H1 (cell line): ENCODE measurements at regions of chr11 and their contacts with region 1.

Region 1: GRCh38 chr11:43920598-43921419 is 21.6 kb upstream of the C11orf96 start:
- DNase-seq: no peak
- H3K4me3 ChIP-seq: no peak overlapping the region
- H3K27ac ChIP-seq: no peak overlapping the region
- H3K4me1 ChIP-seq: peaks cover 2 to 22% (median 11%) of the 10 kb centered on the region in 4 experiments; a peak in 6 of 7 replicates
- H3K27me3 ChIP-seq: no peaks in the 10 kb centered on the region
- CTCF ChIP-seq: no peak
- EP300 ChIP-seq: no peak
- POLR2A ChIP-seq: no peak
- RAD21 ChIP-seq: no peak

Region 2: DNA sequence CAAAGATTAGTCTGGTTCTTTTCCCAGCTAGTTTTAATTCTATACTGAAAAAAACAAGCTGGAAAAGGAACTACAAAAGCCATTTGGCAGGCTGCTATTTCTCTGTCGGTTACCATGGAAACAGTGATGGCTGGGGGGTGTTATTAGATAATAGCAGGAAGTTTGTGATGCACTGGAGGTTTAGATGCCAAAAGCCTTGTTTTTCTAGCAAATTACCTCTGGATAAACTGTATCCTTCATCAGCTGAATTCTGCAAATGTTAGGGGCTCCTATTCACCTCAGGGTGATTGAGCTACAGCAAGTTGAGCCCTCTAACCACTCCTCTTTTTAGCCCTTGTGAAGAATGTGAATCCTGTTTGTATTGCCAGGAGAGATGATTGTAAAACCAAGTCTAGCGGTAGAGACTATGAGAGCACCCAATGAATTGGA is 15.0 kb before region 1 on chr11:
- CTCF ChIA-PET with region 1: interaction called, 12 read pairs
- POLR2A ChIA-PET with region 1: interaction called, 5 read pairs
- DNase-seq: no peak
- H3K4me3 ChIP-seq: no peak overlapping the region
- H3K27ac ChIP-seq: no peak overlapping the region
- H3K4me1 ChIP-seq: no peaks in the 10 kb centered on the region
- H3K27me3 ChIP-seq: no peaks in the 10 kb centered on the region; a peak in 1 of 7 replicates
- CTCF ChIP-seq: no peak
- EP300 ChIP-seq: no peak
- POLR2A ChIP-seq: no peak
- RAD21 ChIP-seq: no peak

Region 3: GRCh38 chr11:43937434-43938411 is 16.9 kb after region 1 on chr11:
- CTCF ChIA-PET with region 1: interaction called, 32 read pairs
- POLR2A ChIA-PET with region 1: interaction called, 13 read pairs
- DNase-seq: no peak
- H3K4me3 ChIP-seq: no peak overlapping the region
- H3K27ac ChIP-seq: no peak overlapping the region
- H3K4me1 ChIP-seq: peaks cover 0 to 11% (median 1%) of the 10 kb centered on the region in 4 experiments; a peak in 5 of 7 replicates
- H3K27me3 ChIP-seq: peaks cover 0 to 29% (median 18%) of the 10 kb centered on the region in 4 experiments; a peak in 6 of 7 replicates
- CTCF ChIP-seq: peak in 2 of 3 experiments; percentile 4 to 22; a peak in 1 of 4 replicates
- EP300 ChIP-seq: no peak
- POLR2A ChIP-seq: no peak
- RAD21 ChIP-seq: 0 out of 4 replicates have a peak, but pooled peaks of 1 of the 2 experiments have one; percentile 4

Region 4: DNA sequence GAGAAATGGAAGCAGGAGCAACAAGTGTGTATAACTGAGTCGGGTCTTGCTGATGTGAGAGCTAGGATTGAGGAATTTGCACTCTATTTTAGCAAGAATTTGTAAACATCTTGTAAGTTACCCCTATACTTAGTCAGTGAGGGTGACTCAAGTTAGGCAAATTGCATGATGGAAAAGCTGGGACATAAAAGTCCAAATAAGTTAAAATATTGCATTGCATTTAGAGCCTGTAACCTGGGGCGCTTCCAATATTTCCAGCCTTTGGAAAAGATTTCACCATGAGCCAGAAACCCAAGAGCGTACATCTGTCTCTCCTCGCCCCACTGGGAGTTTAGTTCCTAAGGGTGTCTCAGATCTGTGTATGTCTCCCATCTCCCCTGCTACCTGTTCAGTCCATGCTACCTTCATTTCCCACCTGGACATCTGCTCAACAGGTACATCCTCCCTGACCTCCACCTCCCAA is 90.0 kb after region 1 on chr11:
- CTCF ChIA-PET with region 1: no interaction called
- POLR2A ChIA-PET with region 1: no interaction called
- DNase-seq: no peak
- H3K4me3 ChIP-seq: no peak overlapping the region
- H3K27ac ChIP-seq: no peak overlapping the region
- H3K4me1 ChIP-seq: peaks cover 0 to 3% (median 0%) of the 10 kb centered on the region in 4 experiments; a peak in 2 of 7 replicates
- H3K27me3 ChIP-seq: no peaks in the 10 kb centered on the region; a peak in 1 of 7 replicates
- CTCF ChIP-seq: no peak
- EP300 ChIP-seq: no peak
- POLR2A ChIP-seq: no peak
- RAD21 ChIP-seq: no peak

Region 5: DNA sequence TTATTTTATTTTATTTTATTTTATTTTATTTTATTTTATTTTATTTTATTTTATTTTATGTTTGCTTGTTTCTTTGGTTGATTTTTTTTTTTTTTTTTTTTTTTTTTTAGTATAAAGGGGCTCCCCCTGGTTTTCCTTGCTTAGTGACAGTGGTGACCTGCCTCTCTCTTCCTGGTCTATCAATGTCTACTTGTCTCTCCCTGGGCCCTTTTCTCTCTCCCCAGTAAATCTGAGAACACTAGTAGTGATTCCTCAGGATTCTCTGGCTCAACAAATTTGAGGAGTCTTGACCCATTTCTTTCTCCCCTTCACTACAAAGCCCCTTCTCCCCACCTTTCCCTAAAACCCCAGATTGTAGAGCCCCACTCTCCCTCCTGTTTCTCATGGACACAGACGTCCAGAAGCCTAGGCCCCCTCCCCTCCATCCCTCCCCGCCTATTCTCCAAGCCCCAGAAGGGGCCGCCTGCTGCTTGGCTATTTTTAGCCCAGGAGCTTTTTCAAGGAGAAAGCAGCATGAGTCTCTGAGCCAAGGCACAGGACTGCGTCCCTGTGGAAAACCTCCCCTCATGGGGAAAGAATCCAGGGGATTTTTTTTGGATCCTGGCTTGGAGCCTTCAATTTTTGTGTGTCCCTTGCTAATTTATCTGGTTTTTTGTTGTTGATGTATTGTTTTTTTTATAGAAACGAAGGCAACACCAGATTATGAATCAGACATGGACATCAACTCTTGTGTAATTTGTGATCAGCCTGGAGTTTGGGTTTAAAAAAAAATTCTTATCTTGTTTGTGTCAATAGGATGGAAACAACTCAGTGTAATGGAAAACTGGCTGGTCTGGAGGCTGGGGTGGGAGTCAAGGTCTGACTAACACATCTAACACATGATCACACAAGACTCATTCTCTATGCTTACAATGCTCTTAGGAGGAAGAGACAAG is 109.4 kb after region 1 on chr11:
- CTCF ChIA-PET with region 1: interaction called, 10 read pairs
- POLR2A ChIA-PET with region 1: no interaction called
- DNase-seq: peak in 1 of 2 experiments; percentile 45
- H3K4me3 ChIP-seq: peak overlapping the region in 1 of 4 experiments; percentile 31; a peak in 1 of 8 replicates
- H3K27ac ChIP-seq: no peak overlapping the region
- H3K4me1 ChIP-seq: peaks cover 0 to 11% (median 4%) of the 10 kb centered on the region in 4 experiments; a peak in 6 of 7 replicates
- H3K27me3 ChIP-seq: no peaks in the 10 kb centered on the region
- CTCF ChIP-seq: no peak
- EP300 ChIP-seq: no peak
- POLR2A ChIP-seq: no peak
- RAD21 ChIP-seq: 0 out of 4 replicates have a peak, but pooled peaks of 1 of the 2 experiments have one; percentile 3